Naive thymus-derived CD4-positive, alpha-beta T cell (primary cell): ENCODE measurements at regions of chr10 and their contacts with region 1.

Region 1: GRCh38 chr10:33155720-33156638 is 178.5 kb downstream of the NRP1 start:
- DNase-seq: peak in 7 of 9 donors; percentile 28 to 65 (median 55)
- ATAC-seq: peak; percentile 85
- H3K4me3 ChIP-seq: no peak overlapping the region
- H3K4me3 Mint-ChIP-seq: no peak overlapping the region
- H3K27ac ChIP-seq: no peak overlapping the region
- H3K27ac Mint-ChIP-seq: peak overlapping the region in 8 of 9 donors; percentile 0 to 88 (median 41)
- H3K4me1 ChIP-seq: peaks cover 15 to 44% of the 10 kb centered on the region in 2 donors
- H3K4me1 Mint-ChIP-seq: peaks cover 8 to 41% (median 35%) of the 10 kb centered on the region in 7 donors
- H3K27me3 ChIP-seq: no peaks in the 10 kb centered on the region
- H3K27me3 Mint-ChIP-seq: no peaks in the 10 kb centered on the region

Region 2: GRCh38 chr10:32795598-32796183 is 360.3 kb before region 1 on chr10:
- CTCF ChIA-PET with region 1: interaction called, 3 read pairs
- POLR2A ChIA-PET with region 1: no interaction called
- intact Hi-C with region 1: loop called in 1 of 2 experiments (anchors 1 kb)
- DNase-seq: peak in 5 of 9 donors; percentile 12 to 37 (median 22)
- ATAC-seq: peak; percentile 54
- H3K4me3 ChIP-seq: no peak overlapping the region
- H3K4me3 Mint-ChIP-seq: no peak overlapping the region
- H3K27ac ChIP-seq: no peak overlapping the region
- H3K27ac Mint-ChIP-seq: no peak overlapping the region
- H3K4me1 ChIP-seq: peaks cover 0 to 4% of the 10 kb centered on the region in 2 donors
- H3K4me1 Mint-ChIP-seq: no peaks in the 10 kb centered on the region
- H3K27me3 ChIP-seq: no peaks in the 10 kb centered on the region
- H3K27me3 Mint-ChIP-seq: peaks cover 0 to 3% (median 0%) of the 10 kb centered on the region in 5 donors

Region 3: DNA sequence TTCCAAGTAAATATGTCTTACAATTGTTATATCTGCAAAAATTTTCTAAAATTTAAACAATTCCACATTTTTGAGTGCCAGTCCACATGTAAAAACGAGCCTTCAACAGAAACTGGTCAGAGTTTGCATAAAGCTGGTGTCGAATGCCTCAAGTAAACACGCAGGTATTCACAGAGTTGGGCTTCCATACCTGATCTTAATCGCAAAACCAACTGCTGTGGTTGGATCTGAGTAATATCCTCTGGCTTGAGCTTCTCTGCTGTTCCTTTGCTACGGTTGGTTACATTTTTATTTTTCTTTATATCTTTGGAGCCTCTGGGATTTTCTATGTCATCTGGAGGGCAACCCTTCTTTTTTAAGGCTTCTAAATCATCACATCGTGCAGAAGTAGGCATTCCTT is 226.3 kb before region 1 on chr10:
- CTCF ChIA-PET with region 1: no interaction called
- POLR2A ChIA-PET with region 1: no interaction called
- intact Hi-C with region 1: no loop called
- DNase-seq: no peak
- ATAC-seq: peak; percentile 38
- H3K4me3 ChIP-seq: no peak overlapping the region
- H3K4me3 Mint-ChIP-seq: no peak overlapping the region
- H3K27ac ChIP-seq: no peak overlapping the region
- H3K27ac Mint-ChIP-seq: no peak overlapping the region
- H3K4me1 ChIP-seq: peaks cover 0 to 6% of the 10 kb centered on the region in 2 donors
- H3K4me1 Mint-ChIP-seq: peaks cover 0 to 15% (median 6%) of the 10 kb centered on the region in 7 donors
- H3K27me3 ChIP-seq: no peaks in the 10 kb centered on the region
- H3K27me3 Mint-ChIP-seq: no peaks in the 10 kb centered on the region

Region 4: DNA sequence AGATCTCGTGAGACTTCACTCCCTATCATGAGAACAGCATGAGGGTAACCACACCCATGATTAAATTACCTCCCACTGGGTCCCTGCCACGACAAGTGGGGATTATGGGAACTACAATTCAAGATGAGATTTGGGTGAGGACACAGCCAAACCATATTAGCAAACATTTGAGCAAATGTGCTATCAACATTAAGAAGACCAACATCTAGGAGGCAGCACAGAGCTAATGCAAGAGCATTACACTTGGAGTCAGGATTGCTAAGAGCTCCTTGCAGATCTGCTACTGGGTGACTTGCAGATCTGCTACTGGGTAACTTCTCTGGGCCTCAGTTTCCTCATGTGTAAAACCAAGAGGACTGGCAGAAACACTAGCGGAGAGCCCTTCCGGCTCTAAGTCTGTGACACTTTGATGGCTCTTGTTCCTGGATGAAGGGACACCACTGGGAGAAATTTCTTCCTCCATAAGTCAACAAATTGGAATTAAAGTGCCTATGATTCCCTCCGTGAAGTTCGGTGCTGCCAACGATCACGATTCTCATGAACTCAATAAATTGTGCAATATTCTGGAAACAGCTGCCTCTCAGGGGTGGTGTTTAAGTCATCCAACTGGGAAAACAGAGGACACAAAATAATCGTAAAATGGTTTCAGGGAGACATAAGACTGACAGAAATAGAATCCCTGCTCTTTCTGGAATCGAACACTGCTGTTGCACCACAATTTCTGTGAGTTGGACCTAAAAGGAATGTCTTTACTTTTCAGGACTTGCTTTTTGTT is 82.2 kb before region 1 on chr10:
- CTCF ChIA-PET with region 1: interaction called, 4 read pairs
- POLR2A ChIA-PET with region 1: no interaction called
- intact Hi-C with region 1: loop called in 1 of 2 experiments (anchors 2 kb)
- DNase-seq: no peak
- ATAC-seq: no peak
- H3K4me3 ChIP-seq: no peak overlapping the region
- H3K4me3 Mint-ChIP-seq: no peak overlapping the region
- H3K27ac ChIP-seq: no peak overlapping the region
- H3K27ac Mint-ChIP-seq: no peak overlapping the region
- H3K4me1 ChIP-seq: no peaks in the 10 kb centered on the region
- H3K4me1 Mint-ChIP-seq: peaks cover 0 to 4% (median 0%) of the 10 kb centered on the region in 7 donors
- H3K27me3 ChIP-seq: no peaks in the 10 kb centered on the region
- H3K27me3 Mint-ChIP-seq: no peaks in the 10 kb centered on the region

Region 5: GRCh38 chr10:33087152-33087551 is 68.8 kb before region 1 on chr10:
- CTCF ChIA-PET with region 1: no interaction called
- POLR2A ChIA-PET with region 1: no interaction called
- intact Hi-C with region 1: no loop called
- DNase-seq: peak in 1 of 9 donors; percentile 9
- ATAC-seq: peak; percentile 22
- H3K4me3 ChIP-seq: no peak overlapping the region
- H3K4me3 Mint-ChIP-seq: peak overlapping the region in 7 of 10 donors; percentile 6 to 54 (median 34)
- H3K27ac ChIP-seq: no peak overlapping the region
- H3K27ac Mint-ChIP-seq: peak overlapping the region in 3 of 9 donors; percentile 15 to 30 (median 26)
- H3K4me1 ChIP-seq: peaks cover 8 to 17% of the 10 kb centered on the region in 2 donors
- H3K4me1 Mint-ChIP-seq: peaks cover 6 to 31% (median 14%) of the 10 kb centered on the region in 7 donors
- H3K27me3 ChIP-seq: no peaks in the 10 kb centered on the region
- H3K27me3 Mint-ChIP-seq: no peaks in the 10 kb centered on the region

Region 6: GRCh38 chr10:33115738-33116719 is 40.0 kb before region 1 on chr10:
- CTCF ChIA-PET with region 1: interaction called, 12 read pairs
- POLR2A ChIA-PET with region 1: interaction called, 3 read pairs
- intact Hi-C with region 1: loop called (anchors 1 to 5 kb)
- DNase-seq: no peak
- ATAC-seq: peak; percentile 24
- H3K4me3 ChIP-seq: peak overlapping the region; percentile 31
- H3K4me3 Mint-ChIP-seq: peak overlapping the region in 3 of 10 donors; percentile 8 to 20 (median 13)
- H3K27ac ChIP-seq: no peak overlapping the region
- H3K27ac Mint-ChIP-seq: peak overlapping the region in 3 of 9 donors; percentile 51 to 76 (median 65)
- H3K4me1 ChIP-seq: peaks cover 9 to 95% of the 10 kb centered on the region in 2 donors
- H3K4me1 Mint-ChIP-seq: peaks cover 23 to 69% (median 32%) of the 10 kb centered on the region in 7 donors
- H3K27me3 ChIP-seq: no peaks in the 10 kb centered on the region
- H3K27me3 Mint-ChIP-seq: no peaks in the 10 kb centered on the region